ENCODE measurements at regions of chr12 and their contacts with region 1.

Region 1: DNA sequence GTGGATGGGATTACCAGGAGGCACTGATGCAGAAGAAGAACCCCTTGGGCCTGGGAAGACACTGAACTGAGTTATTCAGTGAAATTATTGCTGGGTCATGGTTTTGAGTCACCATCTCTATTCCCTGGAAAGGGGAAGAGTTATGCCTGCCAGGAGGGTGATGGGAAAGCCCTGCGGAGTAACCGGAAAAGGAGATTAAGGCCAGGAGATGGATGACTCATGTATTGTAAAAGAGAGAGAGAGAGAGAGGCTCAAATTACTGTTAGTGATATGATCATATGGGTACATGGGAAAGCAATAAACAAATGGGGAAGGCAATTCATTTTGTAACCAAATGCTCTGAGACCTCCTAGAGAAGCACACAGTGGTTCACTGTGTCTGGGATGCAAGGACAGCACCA is 243.9 kb downstream of the TMEM132D start:
- DNase-seq: no peak

Region 2: DNA sequence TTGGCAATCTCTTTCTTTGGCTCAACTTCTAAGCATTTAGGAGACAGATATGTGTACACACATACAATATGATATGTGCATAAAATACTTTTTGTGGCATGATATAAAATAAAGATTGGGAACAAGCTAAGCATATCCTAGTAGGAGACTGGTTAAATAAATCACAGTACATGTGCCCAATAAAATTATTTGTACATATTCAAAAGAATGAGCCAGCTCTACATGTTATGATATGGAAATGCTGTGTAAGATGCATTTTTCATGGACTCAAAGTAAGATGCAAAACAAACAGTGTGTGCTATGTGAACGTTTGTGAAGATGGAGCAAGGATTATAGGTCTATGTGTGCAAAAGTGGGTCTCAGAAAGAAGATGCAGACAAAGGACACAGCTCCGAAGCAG is 67.5 kb before region 1 on chr12:
- intact Hi-C with region 1: loop called (anchors 2 kb)
- DNase-seq: no peak

Measured in posterior cingulate gyrus (tissue), 11 donors.